Common myeloid progenitor, CD34-positive (primary cell): ENCODE measurements at regions of chr10 and their contacts with region 1.

Region 1: GRCh38 chr10:72331601-72332422 is 22.9 kb downstream of the DNAJB12 start:
- DNase-seq: peak; percentile 97 to 100 (median 99)
- H3K4me3 ChIP-seq: peak overlapping the region in 4 of 7 experiments; percentile 5 to 56 (median 51)
- H3K27ac ChIP-seq: peak overlapping the region; percentile 75 to 86
- H3K4me1 ChIP-seq: peaks cover 22 to 96% (median 93%) of the 10 kb centered on the region in 4 experiments
- H3K27me3 ChIP-seq: no peaks in the 10 kb centered on the region

Region 2: DNA sequence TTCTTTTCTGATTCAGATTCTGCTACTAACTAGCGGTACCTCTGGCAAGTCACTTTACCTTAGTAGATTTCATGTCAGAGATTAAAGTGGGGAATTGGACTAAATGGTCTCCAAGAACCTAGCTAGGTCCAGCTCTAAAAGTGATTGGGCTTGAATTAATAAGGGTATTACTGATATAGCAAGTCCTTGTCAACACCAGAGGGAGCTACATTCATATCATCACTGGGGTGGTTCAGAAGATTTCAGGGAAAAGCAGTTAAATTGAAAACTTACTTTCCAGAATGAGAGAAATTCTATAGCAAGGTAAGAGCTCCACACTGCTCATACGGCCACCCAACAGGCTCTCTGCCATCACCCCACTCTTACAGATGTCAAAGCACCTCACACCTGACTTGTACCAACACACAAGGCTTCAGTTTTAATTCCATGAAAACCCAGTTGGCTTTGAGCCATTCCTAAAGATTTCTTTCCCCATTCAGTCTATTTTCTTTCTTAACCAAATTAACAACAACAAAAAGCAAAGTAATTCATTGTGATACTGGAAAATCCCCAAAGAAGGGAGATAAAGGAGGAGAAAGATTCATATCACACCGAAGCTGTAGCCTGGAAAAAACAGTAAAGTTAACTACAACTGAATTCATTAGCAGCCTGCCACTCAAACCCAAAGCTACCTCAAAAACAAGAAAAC is 205.5 kb before region 1 on chr10:
- CTCF ChIA-PET with region 1: interaction called, 44 read pairs
- POLR2A ChIA-PET with region 1: no interaction called
- DNase-seq: peak; percentile 55 to 65 (median 59)
- H3K4me3 ChIP-seq: no peak overlapping the region
- H3K27ac ChIP-seq: no peak overlapping the region
- H3K4me1 ChIP-seq: no peaks in the 10 kb centered on the region
- H3K27me3 ChIP-seq: no peaks in the 10 kb centered on the region

Region 3: DNA sequence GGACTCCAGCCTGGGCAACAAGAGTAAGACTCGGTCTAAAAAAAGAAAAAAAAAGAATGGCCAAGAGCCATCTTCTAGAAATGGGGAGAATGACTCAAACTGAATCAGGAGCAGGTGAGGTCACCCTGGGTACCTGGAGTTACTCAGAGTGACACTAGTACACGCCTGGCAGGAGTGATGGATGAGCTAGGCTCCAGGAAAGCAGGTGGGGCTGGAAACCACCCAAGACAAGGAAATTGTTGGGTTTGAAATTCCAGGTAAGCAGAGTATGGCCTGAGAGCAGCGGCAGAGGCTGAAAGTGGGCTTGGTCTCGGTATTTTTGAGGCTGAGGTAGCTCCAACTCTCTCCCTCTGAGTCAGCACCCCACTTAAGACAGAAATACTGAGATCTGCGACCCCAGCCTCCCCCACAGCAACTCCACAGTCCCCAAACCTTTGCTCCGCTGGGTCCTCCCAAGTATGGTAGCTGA is 39.6 kb before region 1 on chr10:
- CTCF ChIA-PET with region 1: interaction called, 10 read pairs
- POLR2A ChIA-PET with region 1: interaction called, 18 read pairs
- DNase-seq: no peak
- H3K4me3 ChIP-seq: no peak overlapping the region
- H3K27ac ChIP-seq: no peak overlapping the region
- H3K4me1 ChIP-seq: peaks cover 5 to 53% (median 20%) of the 10 kb centered on the region in 4 experiments
- H3K27me3 ChIP-seq: no peaks in the 10 kb centered on the region

Region 4: DNA sequence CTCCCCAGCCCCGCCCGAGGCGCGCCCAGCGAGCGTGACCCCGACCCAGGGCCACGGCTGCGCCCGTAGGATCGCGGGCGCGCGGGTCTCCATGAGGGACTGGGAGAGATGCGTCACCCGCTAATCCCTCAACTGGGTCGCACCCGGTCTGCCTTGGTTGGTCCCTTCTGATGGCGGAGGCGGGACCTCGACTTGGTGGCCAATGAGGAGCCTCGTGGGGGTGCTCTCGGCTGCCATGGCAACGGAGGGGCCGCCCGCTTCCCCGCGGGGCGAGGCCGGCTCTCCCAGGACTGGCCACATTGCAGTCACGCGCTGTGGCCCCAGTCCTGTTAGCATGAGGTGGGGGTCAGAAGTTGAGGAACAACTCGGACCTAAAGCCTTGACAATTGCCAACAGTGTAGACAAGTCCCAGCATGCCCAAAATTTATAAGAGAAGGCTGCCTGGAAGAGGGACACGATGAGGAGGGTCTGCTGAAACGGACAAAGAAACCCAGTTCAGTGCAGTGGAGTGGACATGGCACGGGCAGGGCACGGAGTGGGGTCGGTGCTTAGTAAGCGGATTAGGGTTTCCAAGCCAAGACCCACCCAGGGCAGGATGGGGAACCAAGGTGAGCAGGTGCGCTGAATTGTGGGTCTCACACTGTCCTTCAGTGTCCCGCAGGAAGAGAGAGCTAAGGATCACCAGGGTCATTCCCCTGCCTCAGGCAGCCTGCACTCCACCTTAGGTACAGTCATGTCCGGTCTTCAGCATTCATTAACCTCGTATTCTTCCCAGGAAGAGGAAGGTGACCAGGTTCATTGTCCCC is 33.6 kb before region 1 on chr10:
- CTCF ChIA-PET with region 1: interaction called, 8 read pairs
- POLR2A ChIA-PET with region 1: interaction called, 18 read pairs
- DNase-seq: peak; percentile 94 to 97 (median 97)
- H3K4me3 ChIP-seq: peak overlapping the region in 6 of 7 experiments; percentile 13 to 72 (median 56)
- H3K27ac ChIP-seq: peak overlapping the region; percentile 40 to 87
- H3K4me1 ChIP-seq: peaks cover 5 to 46% (median 30%) of the 10 kb centered on the region in 4 experiments
- H3K27me3 ChIP-seq: no peaks in the 10 kb centered on the region

Region 5: DNA sequence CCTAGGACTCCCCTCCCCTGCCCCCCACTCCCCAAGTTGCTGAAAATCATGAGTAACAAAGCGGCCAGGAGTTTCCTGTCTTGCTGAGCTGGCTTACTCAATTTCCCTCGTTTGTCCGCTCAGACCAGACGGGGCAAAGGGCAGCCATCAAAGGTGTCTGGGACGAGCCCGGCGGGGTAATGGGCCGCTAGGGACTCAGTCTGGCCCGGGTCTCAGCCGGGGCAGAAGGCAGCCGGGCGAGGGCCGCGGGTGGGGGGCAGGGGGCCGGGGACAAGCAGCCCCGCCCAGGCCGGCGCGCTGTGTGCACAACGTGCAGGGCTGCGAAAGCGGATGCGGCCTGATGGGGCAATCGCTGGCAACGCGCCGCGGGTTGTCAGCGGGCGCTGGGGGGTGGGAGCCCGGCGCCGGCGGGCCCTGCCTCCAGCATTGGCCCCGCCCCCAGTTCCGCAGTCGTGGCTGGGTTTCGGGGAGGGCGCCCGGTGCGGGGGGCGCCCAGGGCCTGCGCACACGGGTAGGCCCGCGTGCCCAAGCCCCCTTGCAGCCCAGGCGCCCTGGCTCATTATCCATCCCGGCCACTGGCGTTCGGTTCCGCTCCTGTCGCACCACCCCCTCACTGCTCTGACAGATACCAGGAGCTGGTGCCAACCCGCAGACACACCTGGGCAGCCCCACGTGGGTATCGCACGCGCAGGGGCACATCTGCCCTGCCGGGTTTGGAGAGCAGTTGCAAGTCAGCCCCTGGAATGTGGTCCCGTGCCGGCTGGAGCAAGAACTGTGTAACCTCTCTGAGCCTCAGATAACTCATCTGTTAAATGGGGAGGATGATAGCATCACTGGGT is 12.2 kb before region 1 on chr10:
- CTCF ChIA-PET with region 1: interaction called, 242 read pairs
- POLR2A ChIA-PET with region 1: interaction called, 25 read pairs
- DNase-seq: peak; percentile 88 to 94 (median 93)
- H3K4me3 ChIP-seq: peak overlapping the region in 5 of 7 experiments; percentile 40 to 71 (median 50)
- H3K27ac ChIP-seq: peak overlapping the region; percentile 78 to 94
- H3K4me1 ChIP-seq: peaks cover 22 to 94% (median 92%) of the 10 kb centered on the region in 4 experiments
- H3K27me3 ChIP-seq: no peaks in the 10 kb centered on the region

Region 6: DNA sequence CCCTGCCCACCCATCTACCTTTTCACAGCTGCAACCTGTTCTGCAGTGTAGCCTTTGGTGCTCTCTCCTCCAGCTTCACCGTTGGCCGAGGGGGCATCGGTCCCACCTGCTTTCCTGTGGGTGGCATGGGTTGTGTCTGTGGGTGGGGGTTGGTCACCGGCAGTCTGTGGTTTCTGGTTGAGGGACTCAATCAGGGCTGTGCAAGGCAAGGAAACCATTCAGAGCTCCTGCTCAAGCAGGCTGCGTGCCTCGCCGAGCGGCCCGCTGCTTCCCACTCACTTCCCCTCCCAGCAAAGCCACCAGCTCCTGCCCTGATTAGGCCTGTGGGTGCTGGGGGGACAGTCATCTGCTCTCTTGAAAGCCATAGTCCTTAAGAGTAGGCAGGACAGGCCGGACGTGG is 13.1 kb after region 1 on chr10:
- CTCF ChIA-PET with region 1: interaction called, 242 read pairs
- POLR2A ChIA-PET with region 1: no interaction called
- DNase-seq: peak in 1 of 3 donors; percentile 43
- H3K4me3 ChIP-seq: no peak overlapping the region
- H3K27ac ChIP-seq: no peak overlapping the region
- H3K4me1 ChIP-seq: peaks cover 0 to 18% (median 11%) of the 10 kb centered on the region in 4 experiments
- H3K27me3 ChIP-seq: no peaks in the 10 kb centered on the region

Region 7: DNA sequence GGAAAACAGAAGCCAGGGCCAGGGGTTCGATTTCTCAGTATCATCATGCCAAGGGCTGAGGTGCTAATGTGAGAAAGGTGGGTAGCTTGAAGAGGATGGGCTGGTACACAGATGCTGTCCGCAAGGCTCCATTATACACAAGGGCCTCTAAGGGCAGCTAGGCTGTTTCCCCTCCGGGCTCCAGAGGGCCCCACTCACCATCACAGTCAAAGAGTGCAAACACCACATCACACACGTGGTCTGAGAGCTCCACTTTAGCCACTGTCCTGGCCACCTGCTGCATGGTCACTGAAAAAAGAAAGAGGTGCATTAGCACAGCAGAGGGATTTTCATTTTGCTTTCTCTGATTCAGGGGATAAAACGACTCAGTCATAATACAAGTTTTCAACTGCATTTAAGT is 43.8 kb after region 1 on chr10:
- CTCF ChIA-PET with region 1: no interaction called
- POLR2A ChIA-PET with region 1: no interaction called
- DNase-seq: no peak
- H3K4me3 ChIP-seq: no peak overlapping the region
- H3K27ac ChIP-seq: no peak overlapping the region
- H3K4me1 ChIP-seq: peaks cover 0 to 9% (median 0%) of the 10 kb centered on the region in 4 experiments
- H3K27me3 ChIP-seq: no peaks in the 10 kb centered on the region